ENCODE measurements at regions of chr1 and their contacts with region 1.

Region 1: GRCh38 chr1:30929135-30929889 is 20.8 kb upstream of the SDC3 start:
- DNase-seq: peak; percentile 65
- ATAC-seq: peak; percentile 76
- H3K4me3 Mint-ChIP-seq: no peak overlapping the region
- H3K27ac Mint-ChIP-seq: peak overlapping the region; percentile 8
- H3K4me1 Mint-ChIP-seq: peaks cover 8% of the 10 kb centered on the region
- H3K27me3 Mint-ChIP-seq: no peaks in the 10 kb centered on the region

Region 2: DNA sequence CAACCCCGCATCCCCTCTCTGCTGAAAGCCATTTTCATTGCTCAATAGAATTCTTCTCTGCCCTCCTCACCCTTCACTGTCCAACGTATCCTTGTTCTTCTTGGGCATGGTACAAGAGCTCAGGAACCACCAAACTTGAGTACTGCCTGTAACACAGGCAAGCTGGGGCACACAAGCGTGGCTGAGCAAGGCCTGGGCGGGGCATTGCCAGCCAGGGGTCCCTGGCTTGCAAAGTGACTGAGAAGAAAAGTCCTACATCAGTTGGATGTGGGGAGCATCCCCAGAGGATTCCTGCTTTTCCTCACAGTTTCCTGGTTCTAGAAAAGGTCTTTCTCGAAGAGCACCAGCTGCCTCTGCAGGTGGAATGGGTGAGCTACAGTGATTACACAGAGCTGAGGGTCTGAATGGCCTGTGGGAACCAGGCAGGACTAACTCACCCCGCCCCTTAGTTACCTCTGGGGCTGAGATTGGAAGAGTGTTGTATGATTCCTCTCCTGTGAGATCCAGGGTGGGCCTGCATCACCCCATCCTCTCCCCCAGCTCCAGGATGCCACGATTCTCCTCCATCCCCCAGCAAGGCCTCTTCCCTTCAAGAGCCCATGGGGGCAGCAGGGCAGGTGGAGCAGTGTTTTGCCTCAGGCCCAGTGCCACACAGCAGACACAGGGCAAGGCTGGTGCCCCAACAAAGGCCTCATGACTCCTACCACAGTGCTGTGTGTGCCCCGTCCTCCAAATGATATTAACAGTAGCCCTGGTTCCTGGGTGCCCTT is 327.8 kb before region 1 on chr1:
- CTCF ChIA-PET with region 1: no interaction called
- DNase-seq: no peak
- ATAC-seq: no peak
- H3K4me3 Mint-ChIP-seq: no peak overlapping the region
- H3K27ac Mint-ChIP-seq: no peak overlapping the region
- H3K4me1 Mint-ChIP-seq: no peaks in the 10 kb centered on the region
- H3K27me3 Mint-ChIP-seq: no peaks in the 10 kb centered on the region

Region 3: GRCh38 chr1:30911046-30911954 is 18.0 kb before region 1 on chr1:
- CTCF ChIA-PET with region 1: interaction called, 15 read pairs
- DNase-seq: peak; percentile 68
- ATAC-seq: peak; percentile 42
- H3K4me3 Mint-ChIP-seq: no peak overlapping the region
- H3K27ac Mint-ChIP-seq: no peak overlapping the region
- H3K4me1 Mint-ChIP-seq: peaks cover 14% of the 10 kb centered on the region
- H3K27me3 Mint-ChIP-seq: peaks cover 36% of the 10 kb centered on the region

Region 4: DNA sequence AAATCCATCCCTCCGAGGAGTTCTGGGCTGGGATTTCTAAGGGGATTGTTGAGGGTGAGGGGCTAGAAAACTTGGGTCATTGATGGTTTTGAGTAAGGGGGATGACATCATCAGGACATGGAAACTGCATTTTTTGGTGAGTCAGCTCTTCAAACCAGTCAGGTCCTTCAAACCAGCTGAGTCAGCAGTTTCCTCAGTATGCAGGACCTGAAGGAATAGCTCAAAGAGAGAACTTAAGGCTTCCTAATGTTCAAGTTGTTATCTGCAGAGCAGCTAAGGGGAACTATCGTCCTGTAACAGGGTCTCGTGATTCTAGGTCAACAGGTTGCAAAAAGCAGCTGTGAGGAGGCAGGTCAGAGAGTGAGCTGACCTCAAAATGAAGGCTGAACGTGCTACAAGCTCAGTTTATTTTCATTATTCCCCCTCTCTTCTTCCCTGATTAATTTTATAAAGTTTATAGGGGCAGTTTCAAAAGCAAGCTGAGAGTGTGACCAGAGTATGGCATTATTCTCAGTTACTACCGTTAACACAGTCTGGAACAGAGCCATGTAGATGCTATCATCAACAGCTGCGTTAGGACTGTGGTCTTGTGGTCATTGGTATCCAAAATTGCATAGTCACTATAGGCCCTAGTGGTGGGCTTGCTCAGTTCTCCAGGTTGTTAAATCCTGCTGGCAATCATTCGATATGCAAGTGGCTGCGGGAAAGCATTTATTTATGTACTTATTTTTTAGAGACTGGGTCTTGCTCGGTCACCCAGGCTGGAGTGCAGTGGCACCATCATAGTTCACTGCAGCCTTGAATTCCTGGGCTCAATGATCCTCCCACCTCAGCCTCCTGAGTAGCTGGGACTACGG is 10.1 kb before region 1 on chr1:
- CTCF ChIA-PET with region 1: interaction called, 22 read pairs
- DNase-seq: peak; percentile 36
- ATAC-seq: no peak
- H3K4me3 Mint-ChIP-seq: no peak overlapping the region
- H3K27ac Mint-ChIP-seq: no peak overlapping the region
- H3K4me1 Mint-ChIP-seq: peaks cover 6% of the 10 kb centered on the region
- H3K27me3 Mint-ChIP-seq: peaks cover 22% of the 10 kb centered on the region

Region 5: GRCh38 chr1:31390038-31390437 is 460.7 kb after region 1 on chr1:
- CTCF ChIA-PET with region 1: no interaction called
- DNase-seq: no peak
- ATAC-seq: no peak
- H3K4me3 Mint-ChIP-seq: no peak overlapping the region
- H3K27ac Mint-ChIP-seq: no peak overlapping the region
- H3K4me1 Mint-ChIP-seq: peaks cover 8% of the 10 kb centered on the region
- H3K27me3 Mint-ChIP-seq: peaks cover 3% of the 10 kb centered on the region

Region 6: GRCh38 chr1:31483012-31483946 is 554.0 kb after region 1 on chr1:
- CTCF ChIA-PET with region 1: no interaction called
- DNase-seq: no peak
- ATAC-seq: no peak
- H3K4me3 Mint-ChIP-seq: no peak overlapping the region
- H3K27ac Mint-ChIP-seq: no peak overlapping the region
- H3K4me1 Mint-ChIP-seq: peaks cover 9% of the 10 kb centered on the region
- H3K27me3 Mint-ChIP-seq: no peaks in the 10 kb centered on the region